ENCODE measurements at regions of chr12 and their contacts with region 1.

Region 1: GRCh38 chr12:113462117-113462774 is 9.4 kb downstream of the LHX5 start:
- DNase-seq: no peak
- H3K4me3 ChIP-seq: peak overlapping the region; percentile 23
- CTCF ChIP-seq: peak; percentile 94

Region 2: GRCh38 chr12:113445544-113446171 is 16.6 kb before region 1 on chr12:
- CTCF ChIA-PET with region 1: interaction called, 25 read pairs
- POLR2A ChIA-PET with region 1: no interaction called
- DNase-seq: no peak
- H3K4me3 ChIP-seq: no peak overlapping the region
- CTCF ChIP-seq: no peak

Region 3: GRCh38 chr12:113473942-113474341 is 11.7 kb after region 1 on chr12:
- CTCF ChIA-PET with region 1: interaction called, 10 read pairs
- POLR2A ChIA-PET with region 1: no interaction called
- DNase-seq: no peak
- H3K4me3 ChIP-seq: no peak overlapping the region
- CTCF ChIP-seq: no peak

Region 4: DNA sequence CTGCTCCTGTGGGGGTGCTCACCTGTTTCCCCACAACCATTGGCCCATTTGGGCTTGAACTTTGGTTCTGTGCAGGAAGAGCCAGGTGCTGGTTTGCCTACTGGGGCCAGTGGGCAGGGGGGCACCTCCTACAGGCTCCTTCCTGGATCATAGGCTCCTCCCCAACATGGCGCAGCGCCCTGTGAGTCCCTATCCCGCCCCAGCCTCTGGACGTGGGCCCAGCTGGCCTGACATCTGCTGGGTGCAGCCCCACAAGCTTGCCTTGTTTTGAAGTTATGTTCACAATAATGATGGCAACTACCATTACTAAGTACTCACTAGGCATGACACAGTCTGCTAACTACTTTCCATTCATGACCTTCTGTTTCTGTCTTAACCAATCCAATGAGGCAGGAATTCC is 356.0 kb after region 1 on chr12:
- CTCF ChIA-PET with region 1: no interaction called
- POLR2A ChIA-PET with region 1: no interaction called
- DNase-seq: no peak
- H3K4me3 ChIP-seq: no peak overlapping the region
- CTCF ChIP-seq: no peak

Region 5: GRCh38 chr12:113862590-113863454 is 400.6 kb after region 1 on chr12:
- CTCF ChIA-PET with region 1: interaction called, 11 read pairs
- POLR2A ChIA-PET with region 1: no interaction called
- DNase-seq: peak; percentile 45
- H3K4me3 ChIP-seq: no peak overlapping the region
- CTCF ChIP-seq: no peak

Region 6: DNA sequence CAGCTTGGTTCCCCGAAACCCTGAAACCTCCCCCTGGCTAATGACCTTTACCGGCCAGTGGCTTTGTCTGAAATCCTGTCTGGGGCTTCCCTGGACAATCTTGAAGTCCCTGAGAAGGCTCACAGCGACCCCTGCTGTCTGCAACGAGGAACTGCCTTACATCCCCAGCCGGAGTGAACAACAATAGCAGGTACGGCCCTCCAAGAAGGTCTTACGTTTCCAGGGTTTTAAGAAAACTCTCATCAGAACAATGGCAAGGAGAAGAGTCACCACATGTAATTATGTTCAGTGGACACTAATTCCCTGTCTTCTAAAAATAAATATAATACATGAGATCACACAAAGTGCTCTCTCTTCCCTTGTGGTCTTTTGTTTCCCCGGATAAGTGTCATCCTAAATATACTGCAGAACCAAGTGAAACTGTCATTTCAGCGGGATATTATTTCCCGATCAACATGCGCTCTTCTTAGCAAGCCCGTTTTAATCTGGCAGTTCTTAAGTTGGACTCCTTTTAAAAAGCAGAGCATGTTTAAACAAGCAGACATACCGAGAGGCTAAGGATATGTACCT is 450.6 kb after region 1 on chr12:
- CTCF ChIA-PET with region 1: interaction called, 104 read pairs
- POLR2A ChIA-PET with region 1: interaction called, 3 read pairs
- DNase-seq: no peak
- H3K4me3 ChIP-seq: no peak overlapping the region
- CTCF ChIP-seq: peak; percentile 92

Region 7: GRCh38 chr12:113919791-113920190 is 457.5 kb after region 1 on chr12:
- CTCF ChIA-PET with region 1: interaction called, 104 read pairs
- POLR2A ChIA-PET with region 1: no interaction called
- DNase-seq: no peak
- H3K4me3 ChIP-seq: no peak overlapping the region
- CTCF ChIP-seq: no peak

Measured in AG04449 (cell line).